GM12878 (cell line): ENCODE measurements at regions of chr20 and their contacts with region 1.

Region 1: DNA sequence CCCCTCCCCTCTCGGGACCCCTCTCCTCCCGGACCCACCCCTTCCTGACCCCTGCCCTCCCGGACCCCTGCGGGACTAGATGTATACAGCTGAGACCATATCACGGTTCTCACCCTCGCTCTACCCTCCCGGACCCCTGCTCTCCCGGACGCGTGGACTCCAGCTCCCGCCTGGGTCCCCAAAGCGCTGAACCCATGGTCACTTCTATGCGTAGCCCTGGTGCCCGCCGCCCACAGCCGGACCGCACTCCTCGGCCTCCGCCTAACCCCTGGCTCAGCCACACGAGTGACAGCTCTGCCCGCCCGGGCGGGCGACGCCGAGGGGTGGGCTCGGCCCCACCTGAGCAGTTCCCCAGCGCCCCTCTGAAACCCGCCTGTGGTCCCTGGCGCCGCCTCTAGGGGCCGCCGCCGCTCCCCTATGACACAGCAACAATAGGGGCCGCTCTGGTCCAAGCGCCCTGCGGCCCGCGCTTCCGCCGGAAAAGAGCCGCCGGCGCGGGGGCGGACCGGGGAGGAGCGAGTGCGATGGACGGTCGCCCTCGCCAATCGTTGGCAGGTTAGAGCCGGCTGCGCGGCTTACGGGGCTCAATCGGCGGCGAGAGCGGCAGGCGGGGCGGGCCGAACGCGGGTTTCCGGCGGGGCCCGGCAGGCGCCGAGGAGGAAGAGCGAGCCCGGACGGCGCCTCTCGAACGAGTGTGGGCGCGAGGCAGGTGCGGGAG is at the start of gene ADRM1:
- DNase-seq: peak; percentile 76
- ATAC-seq: peak; percentile 93
- H3K4me3 ChIP-seq: peak within 1 kb of the TSS; percentile 82
- H3K27ac ChIP-seq: peak within 1 kb of the TSS; percentile 90
- H3K4me1 ChIP-seq: peaks cover 10% of the 10 kb centered on the region
- H3K27me3 ChIP-seq: no peaks in the 10 kb centered on the region
- CTCF ChIP-seq: peak; percentile 80 to 99 (median 92)
- EP300 ChIP-seq: peak in 1 of 2 experiments; percentile 53; a peak in 1 of 4 replicates
- POLR2A ChIP-seq: peak; percentile 91
- RAD21 ChIP-seq: peak; percentile 64
- polyA plus RNA-seq, gene ADRM1: 3.4 to 13.6 TPM

Region 2: GRCh38 chr20:62339647-62340070 is 37.2 kb after region 1 on chr20:
- CTCF ChIA-PET with region 1: no interaction called
- POLR2A ChIA-PET with region 1: no interaction called
- RAD21 ChIA-PET with region 1: no interaction called
- SMC1A ChIA-PET with region 1: interaction called, 3 read pairs
- in situ Hi-C with region 1: no loop called
- intact Hi-C with region 1: loop called (anchors 1 kb)
- DNase-seq: peak; percentile 89
- ATAC-seq: peak; percentile 90
- H3K4me3 ChIP-seq: peak overlapping the region; percentile 68; the same call in 1 of the 2 replicates
- H3K27ac ChIP-seq: peak overlapping the region; percentile 81
- H3K4me1 ChIP-seq: peaks cover 37% of the 10 kb centered on the region
- H3K27me3 ChIP-seq: no peaks in the 10 kb centered on the region
- CTCF ChIP-seq: no peak
- EP300 ChIP-seq: no peak
- POLR2A ChIP-seq: 0 out of 2 replicates have a peak, but pooled peaks have one; percentile 49
- RAD21 ChIP-seq: no peak